Activated CD4-positive, alpha-beta memory T cell treated with anti-CD3 and anti-CD28 coated beads for 36 hours (primary cell): ENCODE measurements at regions of chr1 and their contacts with region 1.

Region 1: GRCh38 chr1:115609021-115609420 is 32.7 kb upstream of the VANGL1 start:
- DNase-seq: no peak
- H3K4me3 Mint-ChIP-seq: no peak overlapping the region
- H3K27ac Mint-ChIP-seq: no peak overlapping the region
- H3K4me1 Mint-ChIP-seq: no peaks in the 10 kb centered on the region
- H3K27me3 Mint-ChIP-seq: peaks cover 16% of the 10 kb centered on the region

Region 2: GRCh38 chr1:115595279-115596079 is 13.5 kb before region 1 on chr1:
- CTCF ChIA-PET with region 1: interaction called, 12 read pairs
- POLR2A ChIA-PET with region 1: no interaction called
- intact Hi-C with region 1: no loop called
- DNase-seq: peak; percentile 78
- H3K4me3 Mint-ChIP-seq: no peak overlapping the region
- H3K27ac Mint-ChIP-seq: no peak overlapping the region
- H3K4me1 Mint-ChIP-seq: no peaks in the 10 kb centered on the region
- H3K27me3 Mint-ChIP-seq: peaks cover 2% of the 10 kb centered on the region

Region 3: GRCh38 chr1:115624859-115625258 is 15.8 kb after region 1 on chr1:
- CTCF ChIA-PET with region 1: no interaction called
- POLR2A ChIA-PET with region 1: no interaction called
- intact Hi-C with region 1: no loop called
- DNase-seq: no peak
- H3K4me3 Mint-ChIP-seq: no peak overlapping the region
- H3K27ac Mint-ChIP-seq: no peak overlapping the region
- H3K4me1 Mint-ChIP-seq: no peaks in the 10 kb centered on the region
- H3K27me3 Mint-ChIP-seq: peaks cover 4% of the 10 kb centered on the region

Region 4: GRCh38 chr1:115771847-115772457 is 162.9 kb after region 1 on chr1:
- CTCF ChIA-PET with region 1: interaction called, 22 read pairs
- POLR2A ChIA-PET with region 1: no interaction called
- intact Hi-C with region 1: loop called (anchors 1 kb)
- DNase-seq: peak; percentile 11
- H3K4me3 Mint-ChIP-seq: no peak overlapping the region
- H3K27ac Mint-ChIP-seq: no peak overlapping the region
- H3K4me1 Mint-ChIP-seq: no peaks in the 10 kb centered on the region
- H3K27me3 Mint-ChIP-seq: peaks cover 18% of the 10 kb centered on the region

Region 5: GRCh38 chr1:115865704-115866380 is 256.8 kb after region 1 on chr1:
- CTCF ChIA-PET with region 1: no interaction called
- POLR2A ChIA-PET with region 1: no interaction called
- intact Hi-C with region 1: no loop called
- DNase-seq: no peak
- H3K4me3 Mint-ChIP-seq: no peak overlapping the region
- H3K27ac Mint-ChIP-seq: no peak overlapping the region
- H3K4me1 Mint-ChIP-seq: no peaks in the 10 kb centered on the region
- H3K27me3 Mint-ChIP-seq: peaks cover 12% of the 10 kb centered on the region